Heart left ventricle (tissue), 16 donors: ENCODE measurements at regions of chr3 and their contacts with region 1.

Region 1: GRCh38 chr3:134794950-134795745 is at the start of gene EPHB1:
- DNase-seq: peak; percentile 77 to 86 (median 80)
- ATAC-seq: peak; percentile 80 to 93 (median 91)
- H3K4me3 ChIP-seq: peak within 1 kb of the TSS; percentile 30 to 76 (median 56)
- H3K27ac ChIP-seq: peak within 1 kb of the TSS in 2 of 12 donors; percentile 8 to 78
- H3K4me1 ChIP-seq: peaks cover 0 to 28% (median 16%) of the 10 kb centered on the region in 12 donors
- H3K27me3 ChIP-seq: peaks cover 8 to 37% (median 28%) of the 10 kb centered on the region in 9 donors
- CTCF ChIP-seq: peak; percentile 89 to 95 (median 92)
- POLR2A ChIP-seq: peak in 1 of 2 donors; percentile 22
- total RNA-seq, gene EPHB1: 0.31 to 2.2 (median 1.1) TPM

Region 2: GRCh38 chr3:134600685-134601463 is 194.3 kb before region 1 on chr3:
- intact Hi-C with region 1: loop called in 1 of 10 experiments (anchors 2 kb)
- DNase-seq: peak; percentile 41 to 79 (median 54)
- ATAC-seq: peak in 3 of 4 donors; percentile 59 to 74 (median 69)
- H3K4me3 ChIP-seq: no peak overlapping the region
- H3K27ac ChIP-seq: no peak overlapping the region
- H3K4me1 ChIP-seq: peaks cover 0 to 16% (median 1%) of the 10 kb centered on the region in 12 donors
- H3K27me3 ChIP-seq: no peaks in the 10 kb centered on the region
- CTCF ChIP-seq: peak; percentile 89 to 98 (median 94)
- POLR2A ChIP-seq: no peak

Region 3: DNA sequence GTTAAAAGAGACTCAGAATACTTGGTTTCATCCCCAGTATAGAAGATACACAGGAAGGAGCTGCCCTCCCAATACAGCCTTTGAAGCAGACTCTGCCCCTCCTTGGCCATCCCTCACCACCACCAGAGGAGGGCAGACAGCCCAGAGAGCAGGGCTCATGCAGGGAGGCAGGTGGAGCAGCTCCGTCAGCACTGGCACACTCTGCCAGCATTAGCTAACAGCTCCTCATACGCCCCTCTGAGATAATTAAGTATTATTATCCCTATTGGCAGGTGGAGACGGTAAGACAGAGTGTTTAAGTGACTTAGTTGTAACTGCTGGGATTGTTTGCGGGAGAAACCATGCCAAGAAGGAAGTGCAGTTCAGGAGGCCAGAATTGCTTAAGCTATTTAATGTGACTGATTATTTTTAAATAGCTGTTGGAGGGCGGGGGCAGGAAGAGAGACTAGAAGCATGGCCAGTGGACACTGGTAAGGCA is 433.9 kb after region 1 on chr3:
- intact Hi-C with region 1: loop called in 4 of 10 experiments (anchors 10 kb)
- DNase-seq: peak in 3 of 5 donors; percentile 27 to 48 (median 45)
- ATAC-seq: peak; percentile 32 to 89 (median 81)
- H3K4me3 ChIP-seq: no peak overlapping the region
- H3K27ac ChIP-seq: peak overlapping the region in 2 of 12 donors; percentile 53 to 55
- H3K4me1 ChIP-seq: peaks cover 0 to 18% (median 6%) of the 10 kb centered on the region in 12 donors
- H3K27me3 ChIP-seq: no peaks in the 10 kb centered on the region
- CTCF ChIP-seq: peak in 6 of 12 donors; percentile 9 to 31 (median 15)
- POLR2A ChIP-seq: no peak

Region 4: GRCh38 chr3:135240426-135240825 is 445.3 kb after region 1 on chr3:
- intact Hi-C with region 1: loop called in 6 of 10 experiments (anchors 10 kb)
- DNase-seq: no peak
- ATAC-seq: no peak
- H3K4me3 ChIP-seq: no peak overlapping the region
- H3K27ac ChIP-seq: no peak overlapping the region
- H3K4me1 ChIP-seq: no peaks in the 10 kb centered on the region
- H3K27me3 ChIP-seq: peaks cover 0 to 3% (median 0%) of the 10 kb centered on the region in 9 donors
- CTCF ChIP-seq: peak in 2 of 12 donors; percentile 12 to 21
- POLR2A ChIP-seq: no peak

Region 5: DNA sequence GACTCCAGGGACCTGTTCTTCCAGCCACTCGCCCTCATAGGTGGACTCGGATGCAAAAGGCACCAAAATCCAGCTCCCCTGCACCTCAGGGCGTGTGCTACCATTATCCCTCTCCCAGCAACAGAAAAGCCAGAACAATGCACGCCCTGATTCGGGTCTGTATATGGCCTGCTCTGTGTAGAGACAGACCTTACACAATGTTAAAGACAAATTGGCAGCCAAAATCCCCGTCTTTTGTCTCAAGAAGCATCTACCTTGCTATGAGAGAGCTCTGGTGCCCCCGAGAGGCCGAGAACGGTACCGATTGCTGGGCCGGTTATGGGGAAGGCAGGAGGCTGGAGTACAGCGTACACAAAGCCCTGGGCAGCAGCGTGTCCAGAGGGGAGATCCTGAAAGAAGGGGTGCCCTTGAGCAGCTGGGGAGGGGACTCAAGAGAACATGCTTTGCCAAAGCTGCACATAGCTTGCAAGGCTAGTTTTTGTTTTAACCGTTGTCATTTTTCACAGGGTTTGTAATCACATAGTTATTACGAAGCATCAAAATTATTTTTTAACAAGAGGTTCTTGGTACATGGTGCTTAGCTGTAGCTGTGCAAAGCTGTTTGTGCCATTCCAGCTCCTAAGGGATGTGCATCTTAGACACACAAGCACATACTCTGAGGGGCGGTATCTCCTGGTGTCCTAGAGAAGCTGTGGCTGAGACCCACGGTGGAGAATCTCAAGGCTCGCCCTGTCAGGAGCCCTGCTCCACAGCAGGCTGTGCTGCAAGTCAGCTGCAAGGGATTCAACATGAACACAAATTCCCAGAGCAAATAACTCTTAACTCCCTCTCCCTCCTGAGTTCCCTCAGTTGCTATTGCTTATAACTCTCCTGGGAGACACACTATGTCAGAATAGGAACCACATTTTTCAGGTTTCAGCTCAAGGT is 708.9 kb after region 1 on chr3:
- intact Hi-C with region 1: loop called (anchors 2 to 5 kb)
- DNase-seq: peak; percentile 35 to 71 (median 51)
- ATAC-seq: peak in 3 of 4 donors; percentile 72 to 80 (median 75)
- H3K4me3 ChIP-seq: no peak overlapping the region
- H3K27ac ChIP-seq: no peak overlapping the region
- H3K4me1 ChIP-seq: peaks cover 0 to 5% (median 0%) of the 10 kb centered on the region in 12 donors
- H3K27me3 ChIP-seq: peaks cover 0 to 40% (median 5%) of the 10 kb centered on the region in 9 donors
- CTCF ChIP-seq: peak; percentile 41 to 68 (median 58)
- POLR2A ChIP-seq: no peak

Region 6: DNA sequence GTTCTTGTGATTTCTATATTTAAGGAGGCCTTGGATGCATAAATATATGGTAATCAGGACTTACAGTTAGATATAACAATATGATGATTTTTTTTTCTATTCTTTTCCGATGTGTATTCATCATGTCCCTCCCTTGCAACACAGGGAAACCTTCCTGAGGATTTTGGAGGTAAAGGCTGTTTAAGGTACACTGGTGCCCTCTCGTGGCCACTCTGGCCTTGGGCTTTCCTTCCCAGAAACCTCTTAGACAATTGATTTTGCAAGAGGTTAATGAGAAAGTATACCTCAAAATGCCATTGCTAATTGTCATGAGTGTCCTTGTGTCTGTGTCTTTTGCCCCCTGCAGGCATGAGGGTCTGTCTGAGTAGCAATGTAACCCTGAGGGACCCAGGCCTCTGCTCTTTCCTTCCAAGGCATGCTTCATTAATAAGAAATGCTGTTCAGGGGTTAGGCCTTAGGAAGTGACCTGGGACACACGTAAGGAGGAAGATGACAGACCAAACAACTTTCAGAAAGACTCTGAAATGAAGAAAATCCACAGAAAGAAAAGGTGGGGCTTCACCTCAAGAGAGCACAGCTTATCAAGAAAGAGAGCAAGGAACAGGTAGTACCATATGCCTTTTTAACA is 1100.1 kb after region 1 on chr3:
- intact Hi-C with region 1: loop called (anchors 2 to 5 kb)
- DNase-seq: peak; percentile 39 to 67 (median 63)
- ATAC-seq: peak; percentile 42 to 67 (median 64)
- H3K4me3 ChIP-seq: no peak overlapping the region
- H3K27ac ChIP-seq: no peak overlapping the region
- H3K4me1 ChIP-seq: no peaks in the 10 kb centered on the region
- H3K27me3 ChIP-seq: peaks cover 0 to 4% (median 0%) of the 10 kb centered on the region in 9 donors
- CTCF ChIP-seq: peak; percentile 67 to 88 (median 82)
- POLR2A ChIP-seq: no peak

Region 7: GRCh38 chr3:136042608-136043221 is 1247.6 kb after region 1 on chr3:
- intact Hi-C with region 1: loop called in 1 of 10 experiments (anchors 10 kb)
- DNase-seq: no peak
- ATAC-seq: peak in 2 of 4 donors; percentile 47
- H3K4me3 ChIP-seq: no peak overlapping the region
- H3K27ac ChIP-seq: peak overlapping the region in 1 of 12 donors; percentile 19
- H3K4me1 ChIP-seq: peaks cover 0 to 28% (median 0%) of the 10 kb centered on the region in 12 donors
- H3K27me3 ChIP-seq: no peaks in the 10 kb centered on the region
- CTCF ChIP-seq: peak; percentile 36 to 72 (median 66)
- POLR2A ChIP-seq: no peak